ENCODE measurements at regions of chr15 and their contacts with region 1.

Region 1: GRCh38 chr15:59492389-59493377 is 54.7 kb downstream of the FAM81A start:
- DNase-seq: peak; percentile 56 to 66
- H3K4me3 ChIP-seq: no peak overlapping the region
- H3K27ac ChIP-seq: no peak overlapping the region
- H3K4me1 ChIP-seq: peaks cover 3 to 5% of the 10 kb centered on the region in 2 donors
- H3K27me3 ChIP-seq: no peaks in the 10 kb centered on the region
- CTCF ChIP-seq: peak; percentile 51 to 91 (median 79)
- POLR2A ChIP-seq: no peak

Region 2: DNA sequence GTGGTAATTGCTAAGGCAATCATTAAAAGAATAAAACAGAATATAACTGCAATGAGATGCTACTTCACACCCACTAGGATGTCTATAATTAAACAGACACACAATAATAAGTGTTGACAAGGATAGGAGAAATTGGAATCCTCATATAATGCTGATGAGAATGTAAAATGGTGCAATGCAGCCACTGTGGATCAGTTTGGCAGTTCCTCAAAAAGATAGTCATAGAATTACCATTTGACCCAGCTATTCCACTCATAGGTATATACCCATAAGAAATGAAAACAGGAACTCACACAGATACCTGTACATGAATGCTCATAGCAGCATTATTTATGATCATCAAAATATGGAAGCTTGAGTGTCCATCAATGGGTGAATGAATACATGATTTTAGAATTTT is 514.8 kb before region 1 on chr15:
- intact Hi-C with region 1: loop called (anchors 5 kb)
- DNase-seq: no peak
- H3K4me3 ChIP-seq: no peak overlapping the region
- H3K27ac ChIP-seq: no peak overlapping the region
- H3K4me1 ChIP-seq: no peaks in the 10 kb centered on the region
- H3K27me3 ChIP-seq: no peaks in the 10 kb centered on the region
- CTCF ChIP-seq: no peak
- POLR2A ChIP-seq: no peak

Region 3: DNA sequence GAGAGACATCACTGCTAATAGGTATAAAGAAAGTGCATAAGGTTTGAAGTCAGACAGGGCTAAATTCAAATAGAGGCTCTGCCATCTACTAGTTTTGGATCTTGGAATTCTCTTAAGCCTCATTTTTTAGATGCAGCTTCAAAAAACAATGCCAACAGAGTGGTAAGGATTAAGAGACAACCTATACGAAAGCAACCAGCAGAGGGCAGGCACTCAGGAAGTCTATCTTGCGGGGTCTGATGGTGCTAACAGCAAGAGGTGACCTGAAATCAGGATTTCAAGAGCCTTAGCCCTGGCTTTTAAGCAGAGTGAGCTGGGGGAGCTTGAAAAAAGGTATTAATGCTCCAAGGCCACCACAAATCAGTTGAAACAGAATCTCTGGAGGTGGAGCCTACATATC is 245.3 kb before region 1 on chr15:
- intact Hi-C with region 1: loop called (anchors 10 kb)
- DNase-seq: peak; percentile 76
- H3K4me3 ChIP-seq: no peak overlapping the region
- H3K27ac ChIP-seq: no peak overlapping the region
- H3K4me1 ChIP-seq: no peaks in the 10 kb centered on the region
- H3K27me3 ChIP-seq: no peaks in the 10 kb centered on the region
- CTCF ChIP-seq: peak; percentile 19 to 71 (median 62)
- POLR2A ChIP-seq: no peak

Region 4: GRCh38 chr15:59437817-59438562 is 54.7 kb before region 1 on chr15 and contains the start of gene FAM81A:
- intact Hi-C with region 1: no loop called
- DNase-seq: peak; percentile 87 to 90
- H3K4me3 ChIP-seq: peak within 1 kb of the TSS in 2 of 3 donors; percentile 33 to 55
- H3K27ac ChIP-seq: peak within 1 kb of the TSS in 1 of 3 donors; percentile 11
- H3K4me1 ChIP-seq: peaks cover 15% of the 10 kb centered on the region in 2 donors
- H3K27me3 ChIP-seq: no peaks in the 10 kb centered on the region
- CTCF ChIP-seq: no peak
- POLR2A ChIP-seq: peak in 1 of 2 donors; percentile 12
- total RNA-seq, gene FAM81A: 0.27 to 14.3 (median 2.4) TPM

Measured in thyroid gland (tissue), 4 donors.